Natural killer cell (primary cell): ENCODE measurements at regions of chr6 and their contacts with region 1.

Region 1: DNA sequence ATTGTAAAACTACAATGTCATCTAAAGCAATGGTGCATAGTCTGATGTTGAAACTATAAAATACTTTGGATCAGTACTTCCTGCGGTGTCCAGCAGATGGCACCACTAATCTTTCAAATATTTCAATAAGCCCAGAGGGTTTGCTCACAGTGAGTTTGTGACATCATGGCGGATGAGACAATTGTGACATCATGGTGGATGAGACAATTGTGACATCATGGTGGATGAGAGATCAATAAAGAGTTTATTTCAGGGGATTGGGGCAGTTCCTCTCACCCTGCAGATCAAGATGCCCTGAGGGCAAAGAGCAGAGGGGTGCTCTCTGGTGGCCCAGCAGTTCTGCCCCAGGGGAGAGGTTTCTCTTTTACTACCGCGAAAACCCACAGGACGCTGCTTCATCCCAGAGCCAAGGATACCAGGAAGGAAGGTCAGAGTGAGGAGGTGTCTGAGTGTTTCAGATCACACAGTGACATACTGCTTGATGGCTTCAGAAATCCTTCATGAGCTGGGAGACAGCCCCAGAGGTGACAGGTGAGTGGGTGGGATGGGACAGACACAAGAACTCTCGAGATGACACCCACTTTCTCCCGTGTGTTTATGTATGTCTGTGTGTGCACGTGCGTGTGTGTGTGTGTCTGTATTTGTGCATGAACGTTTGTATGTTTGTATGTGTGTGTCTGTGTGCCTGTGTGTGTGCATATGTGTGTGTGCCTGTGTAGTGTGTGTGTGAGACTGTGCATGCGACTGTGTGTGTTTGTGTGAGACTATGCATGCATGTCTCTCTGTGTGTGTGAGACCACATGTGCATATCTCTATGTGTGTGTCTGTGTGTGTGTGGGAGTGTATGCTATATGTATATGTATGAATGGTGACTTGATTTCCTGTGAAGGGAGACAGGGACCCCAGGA is 7.3 kb upstream of the ULBP2 start:
- DNase-seq: peak; percentile 63 to 89
- ATAC-seq: peak; percentile 42 to 74 (median 48)
- H3K4me3 ChIP-seq: no peak overlapping the region
- H3K4me3 Mint-ChIP-seq: no peak overlapping the region
- H3K27ac ChIP-seq: no peak overlapping the region
- H3K27ac Mint-ChIP-seq: peak overlapping the region in 1 of 2 donors; percentile 79
- H3K4me1 ChIP-seq: peaks cover 17% of the 10 kb centered on the region
- H3K4me1 Mint-ChIP-seq: peaks cover 8 to 21% of the 10 kb centered on the region in 2 donors
- H3K27me3 ChIP-seq: peaks cover 63% of the 10 kb centered on the region
- H3K27me3 Mint-ChIP-seq: peaks cover 75 to 94% of the 10 kb centered on the region in 2 donors
- CTCF ChIP-seq: peak; percentile 89

Region 2: GRCh38 chr6:149405823-149406765 is 528.4 kb before region 1 on chr6:
- intact Hi-C with region 1: no loop called
- DNase-seq: no peak
- ATAC-seq: peak in 1 of 3 donors; percentile 21
- H3K4me3 ChIP-seq: no peak overlapping the region
- H3K4me3 Mint-ChIP-seq: no peak overlapping the region
- H3K27ac ChIP-seq: no peak overlapping the region
- H3K27ac Mint-ChIP-seq: peak overlapping the region; percentile 32 to 70
- H3K4me1 ChIP-seq: no peaks in the 10 kb centered on the region
- H3K4me1 Mint-ChIP-seq: peaks cover 8 to 12% of the 10 kb centered on the region in 2 donors
- H3K27me3 ChIP-seq: no peaks in the 10 kb centered on the region
- H3K27me3 Mint-ChIP-seq: no peaks in the 10 kb centered on the region
- CTCF ChIP-seq: no peak

Region 3: DNA sequence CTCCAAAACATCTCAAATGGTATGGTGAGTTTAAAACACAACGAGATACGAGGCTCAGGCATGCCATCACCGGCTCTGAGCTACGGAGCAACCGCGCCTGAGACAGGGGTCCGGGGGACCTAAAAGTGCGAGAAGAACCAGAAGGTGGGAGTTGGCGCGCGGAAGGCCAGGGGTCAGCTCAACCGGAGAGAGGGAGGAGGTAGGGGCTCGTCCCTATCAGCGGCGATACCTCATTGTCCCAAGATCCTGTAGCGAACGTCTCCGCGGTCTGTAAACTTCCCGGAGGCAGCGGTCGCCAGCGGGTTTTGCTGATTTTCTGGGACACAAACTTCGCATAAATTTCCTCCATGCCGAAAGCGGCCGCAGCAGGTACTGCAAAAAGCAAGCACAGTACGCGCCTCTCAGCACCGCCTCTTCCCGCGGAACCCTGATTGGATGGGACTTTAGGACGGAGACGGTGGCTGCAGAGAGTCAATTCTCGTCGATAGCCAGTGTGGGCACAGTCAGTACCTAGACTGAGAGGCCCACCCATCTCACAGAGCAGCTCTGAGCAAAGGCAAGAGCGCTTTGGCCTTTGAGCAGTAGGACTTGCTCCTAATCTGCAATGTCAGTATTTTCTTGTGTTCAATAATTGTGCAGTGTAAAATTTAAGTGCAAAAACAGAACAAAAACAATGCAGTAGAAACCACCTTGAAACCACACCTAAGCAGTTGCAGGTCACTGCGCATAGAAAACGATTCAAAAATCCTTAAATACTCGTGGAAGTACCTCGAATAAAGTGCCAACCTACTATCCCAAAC is 188.2 kb before region 1 on chr6 and contains the start of gene NUP43:
- intact Hi-C with region 1: loop called (anchors 10 kb)
- DNase-seq: peak; percentile 88 to 95
- ATAC-seq: peak; percentile 73 to 81 (median 74)
- H3K4me3 ChIP-seq: peak within 1 kb of the TSS; percentile 93
- H3K4me3 Mint-ChIP-seq: peak within 1 kb of the TSS; percentile 98
- H3K27ac ChIP-seq: peak within 1 kb of the TSS; percentile 65
- H3K27ac Mint-ChIP-seq: peak within 1 kb of the TSS; percentile 90 to 94
- H3K4me1 ChIP-seq: peaks cover 28% of the 10 kb centered on the region
- H3K4me1 Mint-ChIP-seq: peaks cover 25 to 31% of the 10 kb centered on the region in 2 donors
- H3K27me3 ChIP-seq: no peaks in the 10 kb centered on the region
- H3K27me3 Mint-ChIP-seq: no peaks in the 10 kb centered on the region
- CTCF ChIP-seq: peak; percentile 45
- total RNA-seq, gene NUP43: 20.8 to 33.4 (median 23.5) TPM

Region 4: DNA sequence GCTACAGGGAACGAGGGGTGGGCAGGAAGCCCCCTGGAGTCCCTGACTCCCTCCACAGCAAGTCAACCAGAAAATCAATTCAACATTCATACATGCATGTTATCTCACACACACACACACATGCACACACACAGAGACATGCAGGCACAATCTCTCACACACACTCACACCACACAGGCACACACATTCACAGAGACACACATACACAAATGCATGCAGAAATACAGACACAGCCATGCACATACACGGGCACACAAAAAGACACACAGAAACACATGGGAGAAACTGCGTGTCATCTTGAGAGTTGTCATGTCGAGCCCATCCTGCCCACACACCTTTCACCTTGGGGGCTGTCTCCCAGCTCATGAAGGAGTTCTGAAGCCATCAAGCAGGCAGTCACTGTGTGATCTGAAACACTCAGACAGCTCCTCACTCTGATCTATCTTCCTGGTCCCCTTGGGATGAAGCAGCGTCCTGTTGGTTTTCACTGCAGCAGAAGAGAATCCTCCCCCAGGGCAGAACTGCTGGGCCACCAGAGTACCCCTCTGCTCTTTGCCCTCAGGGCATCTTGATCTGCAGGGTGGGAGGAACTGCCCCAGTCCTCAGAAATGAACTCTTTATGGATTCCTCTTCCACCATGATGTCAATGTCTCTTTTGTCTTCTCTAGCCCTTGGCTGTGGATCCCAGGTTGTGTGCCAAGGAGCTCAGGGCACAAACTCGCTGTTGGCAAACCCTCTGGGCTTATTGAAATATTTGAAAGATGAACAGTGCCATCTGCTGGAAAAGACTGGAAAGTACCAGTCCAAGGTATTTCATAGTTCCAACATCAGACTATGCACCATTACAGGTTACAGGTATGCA is 82.1 kb after region 1 on chr6:
- intact Hi-C with region 1: loop called (anchors 1 kb)
- DNase-seq: peak in 1 of 2 donors; percentile 86
- ATAC-seq: peak; percentile 71 to 84 (median 80)
- H3K4me3 ChIP-seq: no peak overlapping the region
- H3K4me3 Mint-ChIP-seq: no peak overlapping the region
- H3K27ac ChIP-seq: no peak overlapping the region
- H3K27ac Mint-ChIP-seq: no peak overlapping the region
- H3K4me1 ChIP-seq: peaks cover 11% of the 10 kb centered on the region
- H3K4me1 Mint-ChIP-seq: peaks cover 10 to 11% of the 10 kb centered on the region in 2 donors
- H3K27me3 ChIP-seq: peaks cover 39% of the 10 kb centered on the region
- H3K27me3 Mint-ChIP-seq: peaks cover 59 to 61% of the 10 kb centered on the region in 2 donors
- CTCF ChIP-seq: peak; percentile 67

Region 5: DNA sequence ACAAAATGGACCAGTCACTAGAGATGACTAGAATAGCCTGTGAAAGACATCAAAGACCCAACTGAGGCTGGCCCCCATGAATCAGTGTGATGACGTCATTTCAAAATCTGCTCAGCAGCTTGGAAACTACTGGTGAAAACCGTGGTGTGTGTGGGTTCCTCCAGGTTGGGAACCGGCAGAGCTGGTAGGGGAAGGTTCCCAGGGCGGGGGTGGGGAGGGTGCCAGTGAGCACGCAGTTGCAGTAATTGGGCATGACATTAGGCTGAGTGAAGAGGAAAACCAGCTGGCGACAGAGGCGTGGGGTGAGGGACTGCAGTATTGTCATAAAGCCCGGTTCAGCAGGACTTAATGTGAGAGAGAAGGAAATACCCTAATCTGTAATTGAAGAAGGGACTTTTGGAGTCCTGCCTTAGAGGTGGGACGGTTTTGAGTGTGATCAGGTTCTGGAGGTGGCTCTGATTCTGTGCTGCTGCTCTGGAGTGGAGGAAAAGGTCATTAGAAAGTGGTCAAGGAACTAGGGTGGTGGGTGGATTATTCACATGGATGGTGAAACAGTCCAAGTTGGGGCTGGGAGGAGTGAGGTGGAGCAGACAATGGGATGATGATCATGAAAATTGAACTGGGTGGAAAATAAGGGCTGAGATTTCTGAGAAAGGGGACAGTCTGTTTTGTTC is 879.0 kb after region 1 on chr6:
- intact Hi-C with region 1: loop called (anchors 10 kb)
- DNase-seq: peak in 1 of 2 donors; percentile 44
- ATAC-seq: no peak
- H3K4me3 ChIP-seq: no peak overlapping the region
- H3K4me3 Mint-ChIP-seq: no peak overlapping the region
- H3K27ac ChIP-seq: peak overlapping the region; percentile 6
- H3K27ac Mint-ChIP-seq: no peak overlapping the region
- H3K4me1 ChIP-seq: no peaks in the 10 kb centered on the region
- H3K4me1 Mint-ChIP-seq: no peaks in the 10 kb centered on the region
- H3K27me3 ChIP-seq: no peaks in the 10 kb centered on the region
- H3K27me3 Mint-ChIP-seq: peaks cover 13 to 15% of the 10 kb centered on the region in 2 donors
- CTCF ChIP-seq: no peak